T-cell (primary cell): ENCODE measurements at regions of chr4 and their contacts with region 1.

Region 1: GRCh38 chr4:105329081-105329480 is 144.8 kb downstream of the PPA2 start:
- DNase-seq: no peak
- ATAC-seq: peak in 1 of 4 experiments; percentile 48
- H3K4me3 ChIP-seq: no peak overlapping the region
- H3K4me3 Mint-ChIP-seq: no peak overlapping the region
- H3K27ac ChIP-seq: no peak overlapping the region
- H3K27ac Mint-ChIP-seq: no peak overlapping the region
- H3K4me1 ChIP-seq: peaks cover 0 to 6% of the 10 kb centered on the region in 2 experiments
- H3K4me1 Mint-ChIP-seq: peaks cover 10 to 12% (median 12%) of the 10 kb centered on the region in 3 donors
- H3K27me3 ChIP-seq: no peaks in the 10 kb centered on the region
- H3K27me3 Mint-ChIP-seq: no peaks in the 10 kb centered on the region

Region 2: DNA sequence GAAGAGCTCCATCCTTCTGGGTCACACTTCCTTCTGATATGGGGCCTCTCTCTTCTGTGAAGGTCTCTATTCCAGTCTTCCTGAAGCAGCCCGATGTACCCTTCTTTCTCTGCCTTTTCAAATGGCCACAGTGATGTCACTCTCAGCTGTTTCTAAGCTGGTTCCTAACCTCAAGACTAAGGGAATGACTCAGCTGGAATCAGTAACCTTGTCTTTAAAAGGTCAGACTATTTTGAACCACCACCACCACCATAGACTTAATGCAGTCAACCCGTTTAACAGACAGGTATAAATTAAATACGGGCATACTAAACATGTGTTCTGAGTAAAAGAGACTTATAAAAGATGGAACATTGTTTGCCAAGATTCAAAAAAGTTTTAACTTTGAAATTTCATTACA is 23.7 kb after region 1 on chr4:
- CTCF ChIA-PET with region 1: interaction called in 1 of 2 experiments, 12 read pairs
- POLR2A ChIA-PET with region 1: no interaction called
- DNase-seq: no peak
- ATAC-seq: no peak
- H3K4me3 ChIP-seq: no peak overlapping the region
- H3K4me3 Mint-ChIP-seq: no peak overlapping the region
- H3K27ac ChIP-seq: no peak overlapping the region
- H3K27ac Mint-ChIP-seq: no peak overlapping the region
- H3K4me1 ChIP-seq: no peaks in the 10 kb centered on the region
- H3K4me1 Mint-ChIP-seq: no peaks in the 10 kb centered on the region
- H3K27me3 ChIP-seq: no peaks in the 10 kb centered on the region
- H3K27me3 Mint-ChIP-seq: no peaks in the 10 kb centered on the region

Region 3: GRCh38 chr4:106149026-106149425 is 819.9 kb after region 1 on chr4:
- CTCF ChIA-PET with region 1: no interaction called
- POLR2A ChIA-PET with region 1: no interaction called
- DNase-seq: no peak
- ATAC-seq: no peak
- H3K4me3 ChIP-seq: no peak overlapping the region
- H3K4me3 Mint-ChIP-seq: no peak overlapping the region
- H3K27ac ChIP-seq: no peak overlapping the region
- H3K27ac Mint-ChIP-seq: no peak overlapping the region
- H3K4me1 ChIP-seq: no peaks in the 10 kb centered on the region
- H3K4me1 Mint-ChIP-seq: no peaks in the 10 kb centered on the region
- H3K27me3 ChIP-seq: no peaks in the 10 kb centered on the region
- H3K27me3 Mint-ChIP-seq: no peaks in the 10 kb centered on the region